Aorta (tissue), 5 donors: ENCODE measurements at regions of chr4 and their contacts with region 1.

Region 1: GRCh38 chr4:73816814-73817213 is 19.7 kb upstream of the CXCL6 start:
- DNase-seq: no peak
- ATAC-seq: no peak
- H3K4me3 ChIP-seq: no peak overlapping the region
- H3K27ac ChIP-seq: no peak overlapping the region
- H3K4me1 ChIP-seq: peaks cover 0 to 2% of the 10 kb centered on the region in 2 donors
- H3K27me3 ChIP-seq: no peaks in the 10 kb centered on the region

Region 2: DNA sequence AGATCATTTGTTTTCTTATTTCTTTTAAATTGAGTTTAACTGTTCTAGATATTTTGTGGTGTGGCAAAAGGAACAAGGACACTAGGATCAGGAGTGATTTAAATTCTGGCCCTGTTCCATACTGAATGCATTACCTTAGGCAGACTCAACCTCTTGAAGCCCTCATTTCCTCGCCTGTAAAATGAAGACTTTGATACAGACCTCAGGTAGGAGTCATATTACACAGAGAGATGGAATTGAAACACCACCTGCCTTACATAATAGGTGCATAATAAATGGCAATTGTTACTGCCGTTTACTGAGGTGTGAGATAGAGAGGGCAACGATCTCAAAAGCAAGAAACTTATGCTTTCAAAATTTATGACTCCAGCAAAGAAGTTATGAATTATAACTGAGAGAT is 168.3 kb before region 1 on chr4:
- intact Hi-C with region 1: no loop called
- DNase-seq: no peak
- ATAC-seq: no peak
- H3K4me3 ChIP-seq: no peak overlapping the region
- H3K27ac ChIP-seq: no peak overlapping the region
- H3K4me1 ChIP-seq: peaks cover 0 to 7% of the 10 kb centered on the region in 2 donors
- H3K27me3 ChIP-seq: no peaks in the 10 kb centered on the region

Region 3: DNA sequence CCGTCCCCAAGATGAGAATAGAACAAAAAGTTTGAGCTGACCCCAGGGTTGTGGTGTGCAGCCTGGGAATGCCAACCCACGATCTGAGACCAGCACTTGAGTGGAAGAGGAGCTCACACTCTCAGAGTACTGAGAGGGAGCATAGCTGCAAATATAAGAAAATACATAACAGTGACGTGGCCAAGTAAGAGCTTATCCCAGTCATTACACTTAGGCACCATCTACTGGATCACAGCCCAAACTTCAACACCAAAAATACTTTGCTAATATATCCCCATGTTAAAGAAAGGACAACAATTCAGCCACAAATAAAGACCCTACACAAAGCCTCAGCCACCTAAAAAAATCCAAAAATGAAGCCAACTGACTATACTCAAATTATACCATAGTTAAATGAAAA is 13.6 kb before region 1 on chr4:
- intact Hi-C with region 1: loop called in 1 of 2 experiments (anchors 1 kb)
- DNase-seq: no peak
- ATAC-seq: no peak
- H3K4me3 ChIP-seq: no peak overlapping the region
- H3K27ac ChIP-seq: no peak overlapping the region
- H3K4me1 ChIP-seq: no peaks in the 10 kb centered on the region
- H3K27me3 ChIP-seq: no peaks in the 10 kb centered on the region

Region 4: DNA sequence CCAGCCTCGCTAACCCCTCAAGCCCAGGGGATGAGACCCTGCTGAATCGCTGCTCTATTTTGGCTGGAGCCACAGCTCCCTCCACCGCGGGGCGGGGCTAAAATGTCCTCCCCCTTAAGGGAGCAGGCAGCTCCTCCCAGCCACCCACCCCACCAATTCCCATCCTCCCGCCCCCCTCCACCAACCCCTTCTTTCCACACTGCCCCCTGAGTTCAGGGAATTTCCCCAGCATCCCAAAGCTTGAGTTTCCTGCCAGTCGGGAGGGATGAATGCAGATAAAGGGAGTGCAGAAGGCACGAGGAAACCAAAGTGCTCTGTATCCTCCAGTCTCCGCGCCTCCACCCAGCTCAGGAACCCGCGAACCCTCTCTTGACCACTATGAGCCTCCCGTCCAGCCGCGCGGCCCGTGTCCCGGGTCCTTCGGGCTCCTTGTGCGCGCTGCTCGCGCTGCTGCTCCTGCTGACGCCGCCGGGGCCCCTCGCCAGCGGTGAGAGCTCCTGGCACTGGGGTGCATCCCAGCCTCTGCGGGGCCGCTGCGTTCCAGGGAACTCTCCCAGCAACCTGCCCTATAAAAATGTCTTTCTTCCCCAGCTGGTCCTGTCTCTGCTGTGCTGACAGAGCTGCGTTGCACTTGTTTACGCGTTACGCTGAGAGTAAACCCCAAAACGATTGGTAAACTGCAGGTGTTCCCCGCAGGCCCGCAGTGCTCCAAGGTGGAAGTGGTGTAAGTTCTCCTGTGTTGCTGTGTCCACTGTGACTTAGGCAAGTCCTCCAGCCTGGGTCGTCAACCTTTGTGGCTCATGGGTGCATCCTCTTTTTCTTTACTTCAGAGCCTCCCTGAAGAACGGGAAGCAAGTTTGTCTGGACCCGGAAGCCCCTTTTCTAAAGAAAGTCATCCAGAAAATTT is 19.8 kb after region 1 on chr4 and contains the start of gene CXCL6:
- intact Hi-C with region 1: loop called in 1 of 2 experiments (anchors 2 kb)
- DNase-seq: peak; percentile 50 to 82
- ATAC-seq: peak; percentile 46
- H3K4me3 ChIP-seq: no peak within 1 kb of the TSS
- H3K27ac ChIP-seq: no peak within 1 kb of the TSS
- H3K4me1 ChIP-seq: no peaks in the 10 kb centered on the region
- H3K27me3 ChIP-seq: no peaks in the 10 kb centered on the region
- total RNA-seq, gene CXCL6: 0.57 TPM in 1 of 2 donors, not detected in the other

Region 5: GRCh38 chr4:73891739-73892405 is 75.1 kb after region 1 on chr4:
- intact Hi-C with region 1: no loop called
- DNase-seq: no peak
- ATAC-seq: no peak
- H3K4me3 ChIP-seq: no peak overlapping the region
- H3K27ac ChIP-seq: no peak overlapping the region
- H3K4me1 ChIP-seq: no peaks in the 10 kb centered on the region
- H3K27me3 ChIP-seq: no peaks in the 10 kb centered on the region

Region 6: GRCh38 chr4:74032064-74032463 is 215.2 kb after region 1 on chr4:
- intact Hi-C with region 1: no loop called
- DNase-seq: no peak
- ATAC-seq: no peak
- H3K4me3 ChIP-seq: no peak overlapping the region
- H3K27ac ChIP-seq: no peak overlapping the region
- H3K4me1 ChIP-seq: no peaks in the 10 kb centered on the region
- H3K27me3 ChIP-seq: no peaks in the 10 kb centered on the region